Activated T-helper 1 cell treated with anti-CD3 and anti-CD28 coated beads, Interleukin-12 subunit alpha, Interleukin-12 subunit beta, Interleukin-2, Interleukin-4 antibody, amounts not matched to agents 30 ng/mL and 10 ng/mL and 1 ng/mL, durations not matched to agents 14 hours and 24 hours and 36 hours (primary cell): ENCODE measurements at regions of chr9 and their contacts with region 1.

Region 1: DNA sequence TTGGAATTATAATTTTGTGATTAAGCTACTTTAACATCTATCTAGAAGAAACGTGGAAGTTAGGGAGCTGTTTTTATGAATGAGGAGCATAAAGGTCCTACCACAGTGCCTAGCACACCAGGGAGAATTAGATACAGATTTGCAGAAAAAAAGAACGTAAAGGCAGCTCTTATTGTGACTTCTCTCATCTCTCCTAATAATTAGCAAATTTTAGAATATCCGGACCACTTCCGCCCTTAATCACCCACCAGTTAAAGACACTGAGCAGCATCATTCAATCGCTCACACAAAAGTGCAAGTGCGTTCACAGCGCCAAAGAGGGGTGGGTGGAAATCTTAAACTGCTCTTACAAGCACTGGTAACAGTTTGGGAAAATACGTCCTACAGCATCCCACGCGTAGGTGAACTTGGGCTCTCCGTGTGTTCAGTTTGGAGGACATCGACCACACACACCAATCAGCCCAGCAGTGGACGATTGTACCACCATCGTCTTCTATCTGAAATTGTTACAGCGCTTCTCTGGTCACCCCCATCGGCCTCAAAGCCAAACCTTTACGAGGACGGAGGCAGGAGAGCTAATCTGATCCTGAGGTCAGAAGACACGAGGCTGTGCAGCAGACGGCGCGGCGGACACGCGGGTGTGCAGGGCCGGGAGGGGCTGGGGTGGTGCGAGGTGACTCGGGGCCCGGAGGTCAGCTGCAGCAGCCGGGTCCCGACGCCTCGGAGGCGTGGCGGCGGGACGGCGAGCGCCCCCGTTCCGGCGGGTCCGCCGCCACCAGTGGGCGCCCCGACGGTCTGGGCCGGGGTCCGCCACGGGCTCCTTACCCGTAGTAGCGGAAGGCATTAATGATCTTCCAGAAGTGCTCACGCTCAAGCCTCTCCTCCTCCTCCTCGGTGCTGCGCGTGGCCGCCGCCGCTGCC is 646 bp downstream of the CARNMT1 start:
- DNase-seq: no peak
- H3K4me3 Mint-ChIP-seq: peak overlapping the region; percentile 97
- H3K27ac Mint-ChIP-seq: peak overlapping the region; percentile 98
- H3K4me1 Mint-ChIP-seq: peaks cover 47% of the 10 kb centered on the region
- H3K27me3 Mint-ChIP-seq: peaks cover 2% of the 10 kb centered on the region

Region 2: DNA sequence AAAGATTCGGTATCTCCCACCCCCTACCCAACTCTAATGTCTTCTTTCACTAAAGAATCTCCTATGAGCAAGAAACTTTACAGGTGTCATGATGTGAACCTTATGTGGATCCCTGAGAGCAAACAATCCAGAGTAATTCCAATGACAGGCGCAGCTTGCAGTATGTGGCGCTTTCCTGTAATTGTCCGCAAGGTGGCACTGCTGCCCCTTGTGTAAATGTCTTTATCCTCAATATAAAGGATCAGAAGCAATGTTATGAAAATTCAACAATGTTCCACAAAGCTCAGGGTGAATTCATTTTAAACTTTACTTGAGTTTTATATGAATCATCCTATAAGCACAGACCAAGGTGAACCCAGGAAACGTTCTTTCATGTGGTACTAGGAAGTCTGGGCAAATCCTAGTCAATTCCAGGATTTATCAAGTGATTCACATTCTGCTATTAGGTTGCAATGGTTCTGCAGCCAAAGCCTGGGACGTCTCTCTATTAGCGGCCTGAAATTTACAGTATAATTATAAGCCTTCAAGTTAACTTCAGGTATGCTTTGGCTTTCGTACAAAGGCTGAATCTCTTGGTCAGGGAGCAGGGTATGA is 253.5 kb before region 1 on chr9:
- intact Hi-C with region 1: loop called (anchors 1 kb)
- DNase-seq: peak; percentile 47
- H3K4me3 Mint-ChIP-seq: no peak overlapping the region
- H3K27ac Mint-ChIP-seq: no peak overlapping the region
- H3K4me1 Mint-ChIP-seq: peaks cover 20% of the 10 kb centered on the region
- H3K27me3 Mint-ChIP-seq: peaks cover 10% of the 10 kb centered on the region

Region 3: DNA sequence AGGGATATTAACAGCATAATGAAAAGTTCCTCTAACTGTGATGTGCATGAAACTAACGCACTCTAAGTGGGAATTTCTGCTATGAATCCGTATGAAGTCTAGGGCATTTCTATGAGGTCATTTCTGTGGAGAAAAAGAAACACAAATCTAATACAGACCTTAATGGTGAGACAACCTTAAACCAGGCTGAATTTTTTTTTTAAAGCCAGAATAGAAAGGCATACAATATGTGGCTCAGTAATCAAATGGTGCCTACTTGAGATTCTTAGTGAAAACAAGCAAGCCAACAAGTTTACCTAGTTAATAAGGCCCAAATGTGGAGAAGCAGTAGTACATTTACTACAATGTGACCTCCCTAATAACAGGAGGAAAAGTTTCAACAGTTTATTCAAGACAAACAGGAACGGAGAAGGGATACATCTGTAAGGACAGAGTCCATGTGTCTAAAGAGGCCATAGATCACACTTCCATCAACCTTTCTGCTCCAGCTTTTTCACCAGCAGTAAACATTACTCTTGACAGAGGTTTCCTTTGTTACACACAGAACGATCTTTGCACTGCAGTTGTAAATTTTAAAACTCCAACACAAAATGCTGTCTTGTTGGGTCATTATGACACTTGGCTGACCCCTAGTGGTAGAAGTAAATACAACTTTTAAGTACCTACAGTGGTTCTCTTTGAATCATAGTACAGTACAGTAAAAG is 25.6 kb before region 1 on chr9:
- intact Hi-C with region 1: loop called (anchors 1 kb)
- DNase-seq: no peak
- H3K4me3 Mint-ChIP-seq: no peak overlapping the region
- H3K27ac Mint-ChIP-seq: no peak overlapping the region
- H3K4me1 Mint-ChIP-seq: no peaks in the 10 kb centered on the region
- H3K27me3 Mint-ChIP-seq: no peaks in the 10 kb centered on the region

Region 4: GRCh38 chr9:75053869-75054268 is 26.4 kb after region 1 on chr9:
- intact Hi-C with region 1: no loop called
- DNase-seq: no peak
- H3K4me3 Mint-ChIP-seq: no peak overlapping the region
- H3K27ac Mint-ChIP-seq: no peak overlapping the region
- H3K4me1 Mint-ChIP-seq: no peaks in the 10 kb centered on the region
- H3K27me3 Mint-ChIP-seq: peaks cover 1% of the 10 kb centered on the region

Region 5: GRCh38 chr9:75088260-75088905 is 60.9 kb after region 1 on chr9 and contains the start of gene OSTF1:
- intact Hi-C with region 1: loop called (anchors 1 kb)
- DNase-seq: peak; percentile 95
- H3K4me3 Mint-ChIP-seq: peak within 1 kb of the TSS; percentile 99
- H3K27ac Mint-ChIP-seq: peak within 1 kb of the TSS; percentile 97
- H3K4me1 Mint-ChIP-seq: peaks cover 64% of the 10 kb centered on the region
- H3K27me3 Mint-ChIP-seq: no peaks in the 10 kb centered on the region
- total RNA-seq, gene OSTF1: 49.5 and 53.6 TPM in 2 replicates

Region 6: DNA sequence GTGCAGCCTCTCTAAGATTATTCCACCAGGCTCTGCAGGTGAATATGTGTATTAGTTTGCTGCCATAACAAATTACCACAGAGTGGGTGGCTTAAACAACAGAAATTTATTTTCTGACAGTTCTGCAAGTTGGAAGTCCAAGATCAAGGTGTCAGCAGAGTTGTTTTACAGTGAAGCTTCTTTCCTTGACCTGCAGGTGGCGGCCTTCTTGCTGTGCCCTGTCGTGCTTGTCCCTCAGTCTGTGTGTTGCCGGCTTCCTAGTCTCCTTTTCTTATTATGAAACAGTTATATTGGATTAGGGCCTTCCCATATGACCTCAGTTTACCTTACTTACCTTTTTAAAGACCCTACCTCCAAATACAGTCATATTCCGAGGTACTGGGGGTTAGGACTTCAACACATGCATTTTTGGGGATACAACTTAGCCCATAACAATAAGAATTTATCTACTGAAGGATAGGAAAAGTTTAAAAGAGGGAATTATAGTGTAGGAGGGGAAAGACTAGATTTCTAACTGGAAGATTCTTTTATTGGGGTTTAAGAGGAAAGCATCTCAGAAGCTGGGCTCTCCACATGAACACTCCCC is 158.2 kb after region 1 on chr9:
- intact Hi-C with region 1: loop called (anchors 5 kb)
- DNase-seq: peak; percentile 11
- H3K4me3 Mint-ChIP-seq: no peak overlapping the region
- H3K27ac Mint-ChIP-seq: no peak overlapping the region
- H3K4me1 Mint-ChIP-seq: peaks cover 27% of the 10 kb centered on the region
- H3K27me3 Mint-ChIP-seq: no peaks in the 10 kb centered on the region

Region 7: DNA sequence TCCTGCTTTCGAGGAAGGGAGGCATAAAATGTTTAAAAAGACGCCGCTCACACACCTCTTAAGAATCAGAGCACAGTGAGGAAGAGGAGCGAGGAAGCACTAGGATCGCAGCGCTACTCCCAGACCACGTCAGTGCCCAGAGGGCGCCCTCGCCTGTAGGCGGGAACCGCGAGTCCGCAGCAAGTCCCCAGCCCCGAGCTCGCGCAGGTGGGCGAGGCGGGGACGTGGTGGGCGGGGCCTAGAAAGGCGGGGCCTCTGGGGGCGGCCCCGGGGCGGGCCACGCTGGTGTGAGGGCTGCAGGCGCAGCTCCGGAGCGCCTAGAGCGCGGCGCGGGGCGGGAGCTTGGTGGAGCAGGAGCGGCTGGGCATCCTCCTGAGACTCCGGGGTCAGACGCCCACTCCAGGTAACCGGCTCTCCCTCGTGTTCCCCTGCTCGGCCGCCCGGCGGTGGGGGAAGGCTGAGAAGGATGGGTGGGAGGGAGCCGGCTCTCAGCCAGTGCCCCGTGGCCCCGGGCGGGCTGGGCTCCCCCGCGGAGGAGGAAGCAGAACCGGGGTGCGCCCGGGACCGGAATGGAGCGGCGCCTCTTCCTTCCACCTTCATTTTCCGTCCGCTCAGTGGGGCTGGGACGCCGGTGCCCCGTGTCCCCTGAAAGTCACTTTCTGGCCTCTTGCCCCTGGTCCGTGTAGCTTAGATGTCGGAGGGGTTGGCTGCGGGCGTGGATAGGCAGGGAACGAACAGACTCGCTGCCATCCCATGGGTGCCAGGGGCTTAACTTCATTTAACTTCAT is 1431.7 kb after region 1 on chr9 and contains the start of gene GCNT1:
- intact Hi-C with region 1: loop called (anchors 5 kb)
- DNase-seq: peak; percentile 92
- H3K4me3 Mint-ChIP-seq: peak within 1 kb of the TSS; percentile 87
- H3K27ac Mint-ChIP-seq: peak within 1 kb of the TSS; percentile 91
- H3K4me1 Mint-ChIP-seq: peaks cover 35% of the 10 kb centered on the region
- H3K27me3 Mint-ChIP-seq: peaks cover 3% of the 10 kb centered on the region
- total RNA-seq, gene GCNT1: 11.6 and 13.1 TPM in 2 replicates